Activated CD4-positive, alpha-beta memory T cell treated with anti-CD3 and anti-CD28 coated beads for 36 hours (primary cell): ENCODE measurements at regions of chr18 and their contacts with region 1.

Region 1: GRCh38 chr18:3062798-3063680 is 50.1 kb upstream of the LPIN2 start:
- DNase-seq: peak; percentile 86
- H3K4me3 Mint-ChIP-seq: peak overlapping the region; percentile 55
- H3K27ac Mint-ChIP-seq: peak overlapping the region; percentile 73
- H3K4me1 Mint-ChIP-seq: peaks cover 68% of the 10 kb centered on the region
- H3K27me3 Mint-ChIP-seq: no peaks in the 10 kb centered on the region

Region 2: GRCh38 chr18:2932247-2933181 is 130.5 kb before region 1 on chr18:
- CTCF ChIA-PET with region 1: interaction called, 33 read pairs
- POLR2A ChIA-PET with region 1: no interaction called
- intact Hi-C with region 1: loop called (anchors 1 kb)
- DNase-seq: no peak
- H3K4me3 Mint-ChIP-seq: peak overlapping the region; percentile 18
- H3K27ac Mint-ChIP-seq: peak overlapping the region; percentile 89
- H3K4me1 Mint-ChIP-seq: peaks cover 45% of the 10 kb centered on the region
- H3K27me3 Mint-ChIP-seq: no peaks in the 10 kb centered on the region

Region 3: GRCh38 chr18:2994603-2995432 is 68.2 kb before region 1 on chr18:
- CTCF ChIA-PET with region 1: interaction called, 102 read pairs
- POLR2A ChIA-PET with region 1: interaction called, 31 read pairs
- intact Hi-C with region 1: loop called (anchors 1 kb)
- DNase-seq: peak; percentile 86
- H3K4me3 Mint-ChIP-seq: peak overlapping the region; percentile 26
- H3K27ac Mint-ChIP-seq: peak overlapping the region; percentile 91
- H3K4me1 Mint-ChIP-seq: peaks cover 83% of the 10 kb centered on the region
- H3K27me3 Mint-ChIP-seq: no peaks in the 10 kb centered on the region

Region 4: GRCh38 chr18:3044894-3045698 is 17.9 kb before region 1 on chr18:
- CTCF ChIA-PET with region 1: interaction called, 25 read pairs
- POLR2A ChIA-PET with region 1: interaction called, 14 read pairs
- intact Hi-C with region 1: loop called (anchors 1 kb)
- DNase-seq: no peak
- H3K4me3 Mint-ChIP-seq: no peak overlapping the region
- H3K27ac Mint-ChIP-seq: no peak overlapping the region
- H3K4me1 Mint-ChIP-seq: peaks cover 22% of the 10 kb centered on the region
- H3K27me3 Mint-ChIP-seq: no peaks in the 10 kb centered on the region

Region 5: GRCh38 chr18:3129053-3129864 is 66.2 kb after region 1 on chr18:
- CTCF ChIA-PET with region 1: interaction called, 49 read pairs
- POLR2A ChIA-PET with region 1: no interaction called
- intact Hi-C with region 1: no loop called
- DNase-seq: peak; percentile 90
- H3K4me3 Mint-ChIP-seq: no peak overlapping the region
- H3K27ac Mint-ChIP-seq: no peak overlapping the region
- H3K4me1 Mint-ChIP-seq: peaks cover 13% of the 10 kb centered on the region
- H3K27me3 Mint-ChIP-seq: no peaks in the 10 kb centered on the region

Region 6: GRCh38 chr18:3269241-3269913 is 206.3 kb after region 1 on chr18:
- CTCF ChIA-PET with region 1: no interaction called
- POLR2A ChIA-PET with region 1: no interaction called
- intact Hi-C with region 1: no loop called
- DNase-seq: no peak
- H3K4me3 Mint-ChIP-seq: no peak overlapping the region
- H3K27ac Mint-ChIP-seq: peak overlapping the region; percentile 24
- H3K4me1 Mint-ChIP-seq: peaks cover 81% of the 10 kb centered on the region
- H3K27me3 Mint-ChIP-seq: no peaks in the 10 kb centered on the region